ENCODE measurements at regions of chr10 and their contacts with region 1.

Region 1: GRCh38 chr10:100338434-100339036 is 8.5 kb upstream of the SCD start:
- DNase-seq: peak; percentile 67 to 89 (median 84)
- H3K4me3 ChIP-seq: no peak overlapping the region
- H3K27ac ChIP-seq: no peak overlapping the region
- H3K4me1 ChIP-seq: no peaks in the 10 kb centered on the region
- H3K27me3 ChIP-seq: no peaks in the 10 kb centered on the region
- CTCF ChIP-seq: peak; percentile 64 to 87 (median 77)
- EP300 ChIP-seq: no peak
- POLR2A ChIP-seq: no peak

Region 2: GRCh38 chr10:100433253-100434240 is 95.0 kb after region 1 on chr10:
- intact Hi-C with region 1: loop called (anchors 1 to 5 kb)
- DNase-seq: peak; percentile 89 to 96 (median 95)
- H3K4me3 ChIP-seq: no peak overlapping the region
- H3K27ac ChIP-seq: no peak overlapping the region
- H3K4me1 ChIP-seq: peaks cover 3% of the 10 kb centered on the region
- H3K27me3 ChIP-seq: no peaks in the 10 kb centered on the region
- CTCF ChIP-seq: peak; percentile 84 to 99 (median 99)
- EP300 ChIP-seq: no peak
- POLR2A ChIP-seq: no peak

Region 3: DNA sequence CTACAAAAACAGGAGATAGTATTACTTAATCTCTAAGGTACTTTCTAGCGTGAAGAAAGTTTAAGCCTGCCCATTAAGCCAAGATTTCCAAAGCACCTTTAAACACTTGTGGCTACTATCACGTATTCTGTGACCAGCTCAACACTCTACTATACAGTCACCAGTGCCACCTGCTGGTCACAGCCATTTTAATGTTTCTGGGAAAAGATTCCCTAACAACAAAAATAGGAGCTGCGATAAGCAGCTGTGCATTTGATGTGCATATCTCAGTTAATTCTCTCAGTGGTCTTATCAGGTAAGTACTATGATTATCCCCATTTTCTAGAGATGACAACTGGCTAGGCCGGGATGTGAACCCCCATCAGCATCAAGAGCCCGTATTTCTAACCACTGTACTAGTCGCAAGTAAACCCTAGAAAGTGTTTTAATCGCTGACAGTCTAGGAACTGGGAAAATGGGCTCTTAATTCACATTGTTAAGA is 180.3 kb after region 1 on chr10:
- intact Hi-C with region 1: loop called in 1 of 4 experiments (anchors 10 kb)
- DNase-seq: peak; percentile 37 to 75 (median 56)
- H3K4me3 ChIP-seq: peak overlapping the region; percentile 34
- H3K27ac ChIP-seq: no peak overlapping the region
- H3K4me1 ChIP-seq: peaks cover 8% of the 10 kb centered on the region
- H3K27me3 ChIP-seq: no peaks in the 10 kb centered on the region
- CTCF ChIP-seq: peak in 2 of 3 donors; percentile 32 to 74
- EP300 ChIP-seq: no peak
- POLR2A ChIP-seq: no peak

Region 4: DNA sequence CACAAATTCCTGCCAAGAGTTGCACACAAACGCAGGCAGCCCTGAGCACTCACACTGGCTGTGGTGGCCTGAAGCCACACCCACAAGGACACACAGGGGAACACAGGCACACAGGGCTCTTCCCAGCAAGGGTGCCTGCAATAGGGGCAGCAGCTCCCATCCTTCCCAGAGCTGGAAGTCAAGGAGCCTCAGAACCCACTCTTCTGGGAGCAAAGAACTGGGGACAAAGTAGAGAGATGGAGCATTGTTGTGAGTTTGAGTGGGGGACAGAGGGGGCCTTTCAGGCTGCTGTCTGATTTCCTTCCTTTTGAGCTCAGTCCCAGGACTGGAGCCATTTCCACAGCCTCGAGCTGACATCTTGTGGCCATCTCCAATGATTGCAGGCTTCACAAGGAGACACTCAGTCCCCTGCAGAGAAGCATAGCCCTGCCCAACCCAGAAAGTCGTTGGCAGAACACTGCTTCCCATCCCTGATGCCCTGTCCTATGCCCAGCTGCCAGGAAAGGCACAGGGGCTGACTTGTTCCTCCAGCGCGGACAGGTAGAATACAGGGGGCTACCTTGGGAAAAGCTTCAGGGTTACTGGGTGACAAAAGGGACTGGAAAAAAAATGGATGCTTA is 539.9 kb after region 1 on chr10:
- intact Hi-C with region 1: loop called in 1 of 4 experiments (anchors 10 kb)
- DNase-seq: peak; percentile 49 to 73 (median 56)
- H3K4me3 ChIP-seq: no peak overlapping the region
- H3K27ac ChIP-seq: no peak overlapping the region
- H3K4me1 ChIP-seq: peaks cover 15% of the 10 kb centered on the region
- H3K27me3 ChIP-seq: no peaks in the 10 kb centered on the region
- CTCF ChIP-seq: peak; percentile 40 to 43 (median 43)
- EP300 ChIP-seq: no peak
- POLR2A ChIP-seq: no peak

Measured in ovary (tissue), 10 donors.